Lower leg skin (tissue), 4 donors: ENCODE measurements at regions of chr7 and their contacts with region 1.

Region 1: DNA sequence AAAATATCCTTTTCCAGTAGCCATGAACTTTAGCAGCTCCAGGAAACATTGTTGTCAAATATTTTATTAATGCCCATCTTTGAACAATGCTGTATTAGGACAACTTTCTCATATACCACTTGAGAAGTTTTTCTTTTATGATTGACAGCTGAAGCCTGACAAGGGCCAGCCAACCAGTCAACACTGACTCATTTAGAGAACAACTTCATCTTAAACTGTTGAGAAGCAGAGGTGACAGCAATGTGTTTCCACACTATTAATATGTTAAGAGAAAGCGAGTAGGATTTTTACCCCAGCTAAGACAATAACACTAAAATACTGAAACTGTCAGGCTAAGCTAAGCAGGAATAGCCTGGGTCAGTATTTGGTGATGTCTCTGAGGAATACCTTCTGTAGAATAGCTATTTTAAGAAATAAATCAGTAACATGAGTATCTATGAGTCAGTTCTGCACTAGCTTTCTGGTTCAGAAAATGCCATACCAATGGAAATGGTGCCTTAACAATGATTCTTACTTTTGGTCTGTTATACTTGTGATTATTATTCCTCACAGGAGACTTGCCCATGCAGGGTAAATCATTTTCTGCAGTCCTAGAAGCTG is 168.8 kb upstream of the POT1 start:
- DNase-seq: no peak
- H3K4me3 ChIP-seq: no peak overlapping the region
- CTCF ChIP-seq: no peak
- POLR2A ChIP-seq: no peak

Region 2: GRCh38 chr7:125130173-125130572 is 31.7 kb after region 1 on chr7:
- intact Hi-C with region 1: loop called (anchors 2 kb)
- DNase-seq: no peak
- H3K4me3 ChIP-seq: no peak overlapping the region
- CTCF ChIP-seq: no peak
- POLR2A ChIP-seq: no peak

Region 3: GRCh38 chr7:126378642-126379041 is 1280.2 kb after region 1 on chr7:
- intact Hi-C with region 1: no loop called
- DNase-seq: no peak
- H3K4me3 ChIP-seq: no peak overlapping the region
- CTCF ChIP-seq: no peak
- POLR2A ChIP-seq: no peak